Endothelial cell of umbilical vein (primary cell): ENCODE measurements at regions of chr7 and their contacts with region 1.

Region 1: GRCh38 chr7:106176414-106177299 is 64.5 kb upstream of the SYPL1 start:
- DNase-seq: peak; percentile 89
- H3K4me3 ChIP-seq: no peak overlapping the region
- H3K27ac ChIP-seq: no peak overlapping the region
- H3K4me1 ChIP-seq: no peaks in the 10 kb centered on the region
- H3K27me3 ChIP-seq: no peaks in the 10 kb centered on the region
- CTCF ChIP-seq: peak; percentile 94 to 96
- POLR2A ChIP-seq: no peak

Region 2: GRCh38 chr7:106216517-106216922 is 39.9 kb after region 1 on chr7:
- CTCF ChIA-PET with region 1: interaction called, 32 read pairs
- POLR2A ChIA-PET with region 1: no interaction called
- dilution Hi-C with region 1: no loop called
- intact Hi-C with region 1: loop called (anchors 2 kb)
- DNase-seq: peak; percentile 96
- H3K4me3 ChIP-seq: peak overlapping the region in 1 of 3 experiments; percentile 46
- H3K27ac ChIP-seq: peak overlapping the region; percentile 94
- H3K4me1 ChIP-seq: peaks cover 42% of the 10 kb centered on the region
- H3K27me3 ChIP-seq: no peaks in the 10 kb centered on the region
- CTCF ChIP-seq: no peak
- POLR2A ChIP-seq: peak; percentile 22

Region 3: DNA sequence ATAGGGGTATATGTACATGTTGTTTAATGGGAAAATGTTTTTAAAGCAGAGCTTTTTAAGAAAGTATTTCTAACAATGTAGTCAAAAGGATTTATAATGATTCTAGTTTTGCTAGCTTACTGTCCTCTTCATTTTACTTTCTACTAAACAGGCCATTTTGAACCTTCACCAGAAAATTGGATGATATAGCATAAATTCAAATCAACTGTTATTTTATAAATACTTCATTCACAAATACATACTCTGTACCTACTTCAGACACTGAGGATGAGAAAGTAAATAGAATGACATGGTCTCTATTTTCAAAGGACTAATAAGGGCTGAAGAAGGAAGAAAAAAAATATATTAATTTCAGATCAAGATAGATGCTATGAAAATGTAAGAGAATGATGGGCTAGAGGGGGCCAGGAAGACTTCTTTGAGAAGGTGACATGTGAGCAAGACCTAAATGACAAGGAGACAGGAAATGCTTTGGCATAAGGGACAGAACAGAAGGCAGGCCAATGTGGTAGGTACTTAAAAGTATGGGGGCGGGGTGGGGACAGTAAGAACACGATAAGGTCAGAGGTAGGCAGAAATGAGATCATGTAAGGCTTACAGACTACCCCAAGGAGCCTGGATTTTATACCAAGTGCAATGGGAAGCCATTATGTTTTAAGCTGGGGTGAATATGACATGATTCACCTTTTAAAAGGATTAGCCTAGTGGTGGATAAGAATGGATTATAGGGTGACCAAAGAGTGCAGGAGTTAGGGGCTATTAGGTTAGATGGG is 103.0 kb after region 1 on chr7:
- CTCF ChIA-PET with region 1: interaction called, 38 read pairs
- POLR2A ChIA-PET with region 1: interaction called, 6 read pairs
- dilution Hi-C with region 1: no loop called
- intact Hi-C with region 1: no loop called
- DNase-seq: no peak
- H3K4me3 ChIP-seq: no peak overlapping the region
- H3K27ac ChIP-seq: no peak overlapping the region
- H3K4me1 ChIP-seq: peaks cover 38% of the 10 kb centered on the region
- H3K27me3 ChIP-seq: no peaks in the 10 kb centered on the region
- CTCF ChIP-seq: no peak
- POLR2A ChIP-seq: no peak

Region 4: DNA sequence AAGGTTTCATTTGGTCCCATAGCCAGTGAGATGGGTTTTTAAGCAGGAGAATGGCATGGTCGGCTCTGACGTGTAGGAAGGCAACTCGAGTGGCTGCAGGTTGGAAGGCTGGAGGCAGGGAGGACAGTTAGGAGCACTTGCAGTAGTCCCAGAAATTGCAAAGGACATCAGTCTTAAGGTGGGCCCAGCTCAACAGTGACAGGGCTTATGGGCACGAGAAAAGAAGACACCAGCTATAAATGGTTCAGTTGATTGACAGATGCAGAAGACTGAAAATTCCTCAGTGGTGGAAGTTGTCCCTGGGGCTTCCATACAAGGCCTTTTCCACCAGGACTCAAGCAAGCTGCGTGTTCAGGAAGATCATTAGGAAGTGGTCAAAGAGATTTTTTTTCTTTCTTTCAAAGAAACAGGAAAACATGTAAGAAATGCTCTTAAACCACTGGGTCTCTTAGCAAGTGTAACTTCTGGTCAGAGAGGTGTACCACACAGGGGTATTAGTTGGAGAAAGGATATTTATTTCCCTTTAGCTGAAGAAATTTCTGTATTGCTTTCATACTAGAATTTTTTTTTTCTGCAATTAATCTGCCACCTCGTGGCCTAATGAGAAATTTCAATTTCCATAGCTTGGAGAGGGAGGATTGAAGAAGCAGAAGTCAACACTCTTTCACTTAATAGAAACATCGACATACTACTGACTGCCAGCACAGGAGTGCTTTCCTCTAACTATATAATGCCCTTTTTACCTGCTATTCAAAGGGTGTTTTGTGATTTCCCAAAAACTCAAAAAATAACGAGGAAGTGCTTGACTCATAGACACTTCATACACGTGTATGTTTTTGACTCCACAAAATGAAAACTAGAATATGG is 285.6 kb after region 1 on chr7:
- CTCF ChIA-PET with region 1: interaction called, 285 read pairs
- POLR2A ChIA-PET with region 1: no interaction called
- dilution Hi-C with region 1: no loop called
- intact Hi-C with region 1: loop called (anchors 1 kb)
- DNase-seq: peak; percentile 83
- H3K4me3 ChIP-seq: no peak overlapping the region
- H3K27ac ChIP-seq: peak overlapping the region; percentile 32
- H3K4me1 ChIP-seq: peaks cover 22% of the 10 kb centered on the region
- H3K27me3 ChIP-seq: no peaks in the 10 kb centered on the region
- CTCF ChIP-seq: peak; percentile 25 to 37
- POLR2A ChIP-seq: no peak

Region 5: DNA sequence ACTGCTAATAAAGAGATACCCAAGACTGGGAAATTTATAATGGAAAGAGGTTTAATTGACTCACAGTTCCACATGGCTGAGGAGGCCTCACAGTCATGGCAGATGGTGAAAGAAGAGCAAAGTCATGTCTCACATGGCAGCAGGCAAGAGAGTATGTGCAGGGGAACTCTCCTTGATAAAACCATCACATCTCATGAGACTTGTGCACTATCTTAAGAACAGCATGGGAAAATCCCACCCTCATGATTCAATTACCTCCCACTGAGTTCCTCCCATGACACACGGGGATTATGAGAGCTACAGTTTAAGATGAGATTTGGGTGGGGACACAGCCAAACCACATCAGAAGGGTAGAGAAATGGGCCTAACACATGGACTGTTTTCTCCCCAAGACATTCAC is 328.0 kb after region 1 on chr7:
- CTCF ChIA-PET with region 1: no interaction called
- POLR2A ChIA-PET with region 1: no interaction called
- dilution Hi-C with region 1: no loop called
- intact Hi-C with region 1: no loop called
- DNase-seq: no peak
- H3K4me3 ChIP-seq: no peak overlapping the region
- H3K27ac ChIP-seq: no peak overlapping the region
- H3K4me1 ChIP-seq: no peaks in the 10 kb centered on the region
- H3K27me3 ChIP-seq: no peaks in the 10 kb centered on the region
- CTCF ChIP-seq: no peak
- POLR2A ChIP-seq: no peak

Region 6: GRCh38 chr7:106542550-106543220 is 366.0 kb after region 1 on chr7:
- CTCF ChIA-PET with region 1: interaction called, 56 read pairs
- POLR2A ChIA-PET with region 1: interaction called, 4 read pairs
- dilution Hi-C with region 1: no loop called
- intact Hi-C with region 1: loop called (anchors 1 kb)
- DNase-seq: peak; percentile 96
- H3K4me3 ChIP-seq: no peak overlapping the region
- H3K27ac ChIP-seq: peak overlapping the region; percentile 59
- H3K4me1 ChIP-seq: peaks cover 44% of the 10 kb centered on the region
- H3K27me3 ChIP-seq: no peaks in the 10 kb centered on the region
- CTCF ChIP-seq: peak; percentile 62 to 68
- POLR2A ChIP-seq: no peak

Region 7: DNA sequence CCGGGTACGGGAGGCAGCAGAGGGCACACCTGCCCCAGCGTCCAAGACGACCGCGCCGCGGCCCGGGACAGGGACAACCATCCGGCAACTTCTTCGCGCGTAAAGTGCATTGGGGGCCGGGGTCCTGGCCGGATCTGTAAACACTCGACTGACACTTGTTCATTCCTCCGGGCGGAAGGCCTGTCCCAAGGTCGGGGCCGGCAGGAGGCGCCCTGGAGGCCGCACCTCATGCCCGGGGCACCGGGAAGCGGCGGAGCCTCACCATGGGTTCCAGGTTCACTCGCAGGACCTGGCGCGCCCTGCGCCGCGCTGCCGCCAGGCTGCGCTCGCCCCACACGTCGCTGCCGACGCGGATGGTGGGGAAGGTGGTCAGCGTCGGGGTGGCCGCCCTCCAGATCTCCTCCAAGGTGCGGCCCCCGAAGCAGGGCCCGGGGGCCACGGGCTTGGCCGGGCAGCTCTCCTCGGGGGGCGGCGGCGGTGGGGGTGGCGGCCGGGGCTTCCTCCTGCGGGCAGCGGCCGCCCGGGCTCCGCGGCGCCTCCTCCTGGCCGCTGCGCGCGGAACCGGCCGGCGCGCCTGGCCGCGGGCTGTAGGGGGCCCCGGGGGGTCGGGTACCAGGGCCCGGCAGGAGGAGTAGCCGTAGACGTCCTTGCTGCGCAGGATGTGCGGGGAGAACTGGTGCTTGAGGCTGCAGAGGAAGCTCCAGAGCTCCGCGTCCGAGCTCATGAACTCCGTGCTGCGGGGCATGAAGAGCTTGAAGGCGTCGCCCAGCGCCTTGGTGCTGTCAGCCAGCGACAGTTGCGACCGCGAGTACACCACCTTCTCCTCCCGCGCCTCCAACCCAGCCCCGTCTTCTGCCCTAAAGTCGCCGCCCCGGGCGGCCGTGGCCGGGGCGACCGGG is 483.6 kb after region 1 on chr7:
- CTCF ChIA-PET with region 1: interaction called, 82 read pairs
- POLR2A ChIA-PET with region 1: no interaction called
- dilution Hi-C with region 1: no loop called
- intact Hi-C with region 1: loop called (anchors 1 kb)
- DNase-seq: peak; percentile 87
- H3K4me3 ChIP-seq: peak overlapping the region; percentile 50 to 100 (median 98)
- H3K27ac ChIP-seq: peak overlapping the region; percentile 90
- H3K4me1 ChIP-seq: peaks cover 22% of the 10 kb centered on the region
- H3K27me3 ChIP-seq: no peaks in the 10 kb centered on the region
- CTCF ChIP-seq: peak; percentile 86 to 89
- POLR2A ChIP-seq: peak; percentile 68

Region 8: GRCh38 chr7:106779877-106780276 is 603.2 kb after region 1 on chr7:
- CTCF ChIA-PET with region 1: interaction called, 9 read pairs
- POLR2A ChIA-PET with region 1: no interaction called
- dilution Hi-C with region 1: no loop called
- intact Hi-C with region 1: loop called (anchors 2 kb)
- DNase-seq: no peak
- H3K4me3 ChIP-seq: no peak overlapping the region
- H3K27ac ChIP-seq: no peak overlapping the region
- H3K4me1 ChIP-seq: peaks cover 16% of the 10 kb centered on the region
- H3K27me3 ChIP-seq: no peaks in the 10 kb centered on the region
- CTCF ChIP-seq: no peak
- POLR2A ChIP-seq: no peak